Naive thymus-derived CD4-positive, alpha-beta T cell (primary cell): ENCODE measurements at regions of chr1 and their contacts with region 1.

Region 1: DNA sequence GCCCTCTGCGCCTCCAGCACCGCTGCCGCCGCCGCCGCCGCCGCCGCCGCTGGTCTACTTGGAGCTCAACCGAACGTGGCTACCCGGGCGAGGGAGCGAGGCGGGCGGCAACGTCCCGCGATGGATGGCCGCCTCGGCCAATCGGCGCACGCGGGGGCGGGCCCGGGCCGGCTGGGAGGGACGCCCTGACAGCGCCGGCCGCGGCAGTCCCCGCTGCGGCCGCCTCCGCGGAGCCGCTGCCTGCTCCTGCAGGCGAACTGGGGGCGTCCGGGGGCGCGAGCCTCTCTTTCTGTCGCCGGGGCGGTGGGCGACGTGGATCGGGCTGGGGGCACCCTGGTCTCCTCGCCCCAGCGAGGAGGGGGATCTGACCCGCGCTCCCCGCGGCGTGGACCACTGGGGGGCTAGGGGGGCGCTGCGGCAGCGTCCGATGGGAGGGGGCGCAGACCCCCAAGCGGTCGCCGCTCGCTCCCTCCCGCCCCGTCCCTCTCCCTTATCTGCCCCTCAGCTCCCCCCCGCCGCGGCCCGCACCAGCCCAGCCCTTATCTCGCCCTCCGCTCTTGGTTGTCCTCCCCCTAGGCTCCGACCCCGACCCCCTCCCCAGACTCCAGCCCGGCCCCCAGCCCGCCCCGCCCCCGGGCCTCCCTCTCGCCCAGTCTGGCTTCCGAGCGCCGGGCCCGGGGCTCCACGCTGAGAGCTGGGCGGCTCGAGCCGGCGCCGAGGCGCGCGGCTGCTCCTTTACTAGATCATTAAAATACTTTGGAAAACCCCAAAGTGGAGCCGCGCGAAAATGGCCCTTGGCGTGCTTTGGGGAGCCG is at the start of gene SSBP3:
- DNase-seq: peak; percentile 89 to 96 (median 93)
- ATAC-seq: peak; percentile 95
- H3K4me3 ChIP-seq: peak within 1 kb of the TSS; percentile 76
- H3K4me3 Mint-ChIP-seq: peak within 1 kb of the TSS; percentile 92 to 99 (median 96)
- H3K27ac ChIP-seq: peak within 1 kb of the TSS; percentile 93
- H3K27ac Mint-ChIP-seq: peak within 1 kb of the TSS; percentile 84 to 97 (median 91)
- H3K4me1 ChIP-seq: peaks cover 40 to 44% of the 10 kb centered on the region in 2 donors
- H3K4me1 Mint-ChIP-seq: peaks cover 59 to 74% (median 69%) of the 10 kb centered on the region in 7 donors
- H3K27me3 ChIP-seq: no peaks in the 10 kb centered on the region
- H3K27me3 Mint-ChIP-seq: no peaks in the 10 kb centered on the region
- total RNA-seq, gene SSBP3: 69.4 to 124 (median 98.1) TPM

Region 2: GRCh38 chr1:53837924-53838652 is 568.5 kb before region 1 on chr1 and contains the start of gene NDC1:
- CTCF ChIA-PET with region 1: no interaction called
- POLR2A ChIA-PET with region 1: no interaction called
- intact Hi-C with region 1: loop called (anchors 1 to 2 kb)
- DNase-seq: peak; percentile 84 to 95 (median 92)
- ATAC-seq: peak; percentile 95
- H3K4me3 ChIP-seq: peak within 1 kb of the TSS; percentile 92
- H3K4me3 Mint-ChIP-seq: peak within 1 kb of the TSS; percentile 96 to 100 (median 99)
- H3K27ac ChIP-seq: peak within 1 kb of the TSS; percentile 95
- H3K27ac Mint-ChIP-seq: peak within 1 kb of the TSS; percentile 96 to 99 (median 98)
- H3K4me1 ChIP-seq: no peaks in the 10 kb centered on the region
- H3K4me1 Mint-ChIP-seq: peaks cover 10 to 41% (median 30%) of the 10 kb centered on the region in 7 donors
- H3K27me3 ChIP-seq: no peaks in the 10 kb centered on the region
- H3K27me3 Mint-ChIP-seq: no peaks in the 10 kb centered on the region
- total RNA-seq, gene NDC1: 6.9 to 20.2 (median 13.2) TPM

Region 3: DNA sequence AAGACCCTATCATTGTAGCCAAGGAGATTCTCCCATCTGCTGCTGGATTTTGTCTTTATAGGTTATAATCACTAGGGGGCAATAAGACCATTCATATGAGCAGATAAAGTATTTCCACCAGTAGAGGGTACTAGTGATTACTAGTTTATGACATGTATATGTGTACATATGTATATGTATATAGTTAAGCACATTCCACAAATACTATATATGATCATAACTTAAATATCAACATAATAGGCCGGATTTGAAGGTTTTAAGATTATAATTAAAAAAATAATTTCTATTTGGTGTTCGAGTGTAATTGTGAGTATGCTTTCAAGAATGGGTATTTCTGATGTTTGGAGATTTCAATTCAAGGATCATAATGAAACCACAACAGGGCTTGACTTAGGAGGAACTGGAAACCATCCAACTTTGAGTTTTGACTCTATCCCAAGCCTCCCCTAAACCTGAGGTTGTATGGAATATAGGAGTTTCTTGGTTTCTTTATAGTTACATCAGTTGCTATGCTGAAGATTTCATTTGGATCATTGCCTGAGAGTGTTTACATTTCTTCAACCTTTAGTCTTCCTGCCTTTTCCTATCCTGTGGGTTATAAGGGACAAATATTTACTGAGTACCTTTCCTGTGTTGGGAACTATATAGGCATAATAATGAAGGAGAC is 336.2 kb before region 1 on chr1:
- CTCF ChIA-PET with region 1: no interaction called
- POLR2A ChIA-PET with region 1: no interaction called
- intact Hi-C with region 1: loop called (anchors 1 to 5 kb)
- DNase-seq: peak in 7 of 9 donors; percentile 11 to 66 (median 54)
- ATAC-seq: peak; percentile 100
- H3K4me3 ChIP-seq: no peak overlapping the region
- H3K4me3 Mint-ChIP-seq: no peak overlapping the region
- H3K27ac ChIP-seq: no peak overlapping the region
- H3K27ac Mint-ChIP-seq: peak overlapping the region in 1 of 9 donors; percentile 16
- H3K4me1 ChIP-seq: no peaks in the 10 kb centered on the region
- H3K4me1 Mint-ChIP-seq: peaks cover 0 to 6% (median 0%) of the 10 kb centered on the region in 7 donors
- H3K27me3 ChIP-seq: no peaks in the 10 kb centered on the region
- H3K27me3 Mint-ChIP-seq: no peaks in the 10 kb centered on the region

Region 4: DNA sequence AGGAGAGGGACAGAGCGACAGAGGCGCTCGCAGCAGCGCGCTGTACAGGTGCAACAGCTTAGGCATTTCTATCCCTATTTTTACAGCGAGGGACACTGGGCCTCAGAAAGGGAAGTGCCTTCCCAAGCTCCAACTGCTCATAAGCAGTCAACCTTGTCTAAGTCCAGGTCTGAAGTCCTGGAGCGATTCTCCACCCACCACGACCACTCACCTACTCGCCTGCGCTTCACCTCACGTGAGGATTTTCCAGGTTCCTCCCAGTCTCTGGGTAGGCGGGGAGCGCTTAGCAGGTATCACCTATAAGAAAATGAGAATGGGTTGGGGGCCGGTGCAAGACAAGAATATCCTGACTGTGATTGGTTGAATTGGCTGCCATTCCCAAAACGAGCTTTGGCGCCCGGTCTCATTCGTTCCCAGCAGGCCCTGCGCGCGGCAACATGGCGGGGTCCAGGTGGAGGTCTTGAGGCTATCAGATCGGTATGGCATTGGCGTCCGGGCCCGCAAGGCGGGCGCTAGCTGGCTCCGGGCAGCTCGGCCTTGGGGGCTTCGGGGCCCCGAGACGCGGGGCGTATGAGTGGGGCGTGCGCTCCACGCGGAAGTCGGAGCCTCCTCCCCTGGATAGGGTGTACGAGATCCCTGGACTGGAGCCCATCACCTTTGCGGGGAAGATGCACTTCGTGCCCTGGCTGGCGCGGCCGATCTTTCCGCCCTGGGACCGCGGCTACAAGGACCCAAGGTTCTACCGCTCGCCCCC is 206.6 kb before region 1 on chr1 and contains the starts of genes CYB5RL and MRPL37:
- CTCF ChIA-PET with region 1: interaction called, 5 read pairs
- POLR2A ChIA-PET with region 1: interaction called, 7 read pairs
- intact Hi-C with region 1: loop called (anchors 1 kb)
- DNase-seq: peak; percentile 65 to 94 (median 91)
- ATAC-seq: peak; percentile 99
- H3K4me3 ChIP-seq: peak within 1 kb of the TSS; percentile 69
- H3K4me3 Mint-ChIP-seq: peak within 1 kb of the TSS; percentile 90 to 96 (median 92)
- H3K27ac ChIP-seq: peak within 1 kb of the TSS; percentile 81
- H3K27ac Mint-ChIP-seq: peak within 1 kb of the TSS; percentile 64 to 93 (median 87)
- H3K4me1 ChIP-seq: peaks cover 9 to 17% of the 10 kb centered on the region in 2 donors
- H3K4me1 Mint-ChIP-seq: peaks cover 27 to 44% (median 40%) of the 10 kb centered on the region in 7 donors
- H3K27me3 ChIP-seq: no peaks in the 10 kb centered on the region
- H3K27me3 Mint-ChIP-seq: no peaks in the 10 kb centered on the region
- total RNA-seq, gene CYB5RL: 5.1 to 13.5 (median 7.1) TPM
- total RNA-seq, gene MRPL37: 25.4 to 86.7 (median 36.4) TPM

Region 5: GRCh38 chr1:54273092-54273794 is 133.3 kb before region 1 on chr1:
- CTCF ChIA-PET with region 1: no interaction called
- POLR2A ChIA-PET with region 1: no interaction called
- intact Hi-C with region 1: no loop called
- DNase-seq: no peak
- ATAC-seq: no peak
- H3K4me3 ChIP-seq: no peak overlapping the region
- H3K4me3 Mint-ChIP-seq: no peak overlapping the region
- H3K27ac ChIP-seq: no peak overlapping the region
- H3K27ac Mint-ChIP-seq: peak overlapping the region in 4 of 9 donors; percentile 4 to 60 (median 55)
- H3K4me1 ChIP-seq: peaks cover 0 to 27% of the 10 kb centered on the region in 2 donors
- H3K4me1 Mint-ChIP-seq: peaks cover 28 to 77% (median 65%) of the 10 kb centered on the region in 7 donors
- H3K27me3 ChIP-seq: no peaks in the 10 kb centered on the region
- H3K27me3 Mint-ChIP-seq: no peaks in the 10 kb centered on the region

Region 6: DNA sequence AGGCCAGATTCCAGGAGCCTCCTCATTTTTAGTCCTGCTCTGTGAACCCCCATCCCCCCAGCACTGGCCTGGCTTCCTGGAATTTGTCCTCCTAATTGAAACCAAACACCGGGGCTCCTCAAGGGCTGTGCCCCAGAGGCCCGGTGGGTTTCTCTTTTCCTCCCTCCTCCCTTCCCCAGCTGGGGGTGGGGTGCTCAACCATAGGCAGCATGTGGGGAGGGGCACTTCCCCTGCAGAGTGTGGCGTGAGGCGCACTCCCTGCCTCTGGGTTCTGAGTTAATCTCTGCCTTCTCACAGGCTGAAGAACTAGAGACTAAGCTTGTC is 73.9 kb after region 1 on chr1:
- CTCF ChIA-PET with region 1: interaction called, 7 read pairs
- POLR2A ChIA-PET with region 1: interaction called, 70 read pairs
- intact Hi-C with region 1: no loop called
- DNase-seq: no peak
- ATAC-seq: peak; percentile 46
- H3K4me3 ChIP-seq: no peak overlapping the region
- H3K4me3 Mint-ChIP-seq: peak overlapping the region; percentile 6 to 81 (median 56)
- H3K27ac ChIP-seq: peak overlapping the region; percentile 58
- H3K27ac Mint-ChIP-seq: peak overlapping the region; percentile 53 to 96 (median 86)
- H3K4me1 ChIP-seq: peaks cover 41 to 42% of the 10 kb centered on the region in 2 donors
- H3K4me1 Mint-ChIP-seq: peaks cover 43 to 82% (median 75%) of the 10 kb centered on the region in 7 donors
- H3K27me3 ChIP-seq: no peaks in the 10 kb centered on the region
- H3K27me3 Mint-ChIP-seq: peaks cover 0 to 17% (median 0%) of the 10 kb centered on the region in 5 donors

Region 7: GRCh38 chr1:54764133-54764921 is 357.8 kb after region 1 on chr1 and contains the start of gene PARS2:
- CTCF ChIA-PET with region 1: no interaction called
- POLR2A ChIA-PET with region 1: no interaction called
- intact Hi-C with region 1: loop called (anchors 1 to 2 kb)
- DNase-seq: peak; percentile 89 to 98 (median 97)
- ATAC-seq: peak; percentile 96
- H3K4me3 ChIP-seq: peak within 1 kb of the TSS; percentile 95
- H3K4me3 Mint-ChIP-seq: peak within 1 kb of the TSS; percentile 94 to 97 (median 96)
- H3K27ac ChIP-seq: peak within 1 kb of the TSS; percentile 83
- H3K27ac Mint-ChIP-seq: peak within 1 kb of the TSS; percentile 81 to 97 (median 93)
- H3K4me1 ChIP-seq: peaks cover 0 to 9% of the 10 kb centered on the region in 2 donors
- H3K4me1 Mint-ChIP-seq: peaks cover 14 to 26% (median 24%) of the 10 kb centered on the region in 7 donors
- H3K27me3 ChIP-seq: no peaks in the 10 kb centered on the region
- H3K27me3 Mint-ChIP-seq: no peaks in the 10 kb centered on the region
- total RNA-seq, gene PARS2: 0.66 to 7.6 (median 4.7) TPM

Region 8: GRCh38 chr1:55747408-55747841 is 1340.9 kb after region 1 on chr1:
- CTCF ChIA-PET with region 1: no interaction called
- POLR2A ChIA-PET with region 1: no interaction called
- intact Hi-C with region 1: no loop called
- DNase-seq: no peak
- ATAC-seq: no peak
- H3K4me3 ChIP-seq: no peak overlapping the region
- H3K4me3 Mint-ChIP-seq: no peak overlapping the region
- H3K27ac ChIP-seq: no peak overlapping the region
- H3K27ac Mint-ChIP-seq: no peak overlapping the region
- H3K4me1 ChIP-seq: no peaks in the 10 kb centered on the region
- H3K4me1 Mint-ChIP-seq: no peaks in the 10 kb centered on the region
- H3K27me3 ChIP-seq: no peaks in the 10 kb centered on the region
- H3K27me3 Mint-ChIP-seq: peaks cover 0 to 25% (median 8%) of the 10 kb centered on the region in 5 donors